ENCODE measurements at regions of chr7 and their contacts with region 1.

Region 1: DNA sequence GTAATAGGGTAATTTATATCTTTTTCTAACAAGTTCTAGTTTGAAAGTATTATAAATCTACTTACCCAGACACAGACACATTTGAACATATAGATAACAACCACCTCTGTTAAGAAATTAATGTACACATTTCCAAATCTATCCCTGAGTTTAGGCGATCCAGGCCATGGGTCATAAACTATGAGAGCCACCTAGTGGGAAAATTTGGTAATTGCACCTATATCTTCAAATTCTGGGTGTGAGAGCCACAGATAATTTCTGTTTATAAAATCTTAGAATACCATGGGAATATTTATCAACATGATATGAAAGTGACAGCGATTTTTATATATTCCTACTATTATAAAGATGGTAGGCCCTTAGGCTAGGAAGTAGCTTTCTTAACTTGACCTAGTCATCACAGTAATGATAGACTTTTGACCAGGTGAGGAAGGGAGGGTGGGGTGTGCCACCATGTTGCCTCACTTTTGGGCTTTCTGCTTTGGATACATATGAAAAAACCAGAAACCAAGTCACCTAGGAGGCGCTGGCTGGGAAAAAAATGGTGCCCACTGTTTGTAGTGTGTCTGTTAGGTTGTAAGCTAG is 8.0 kb upstream of the EPHA1 start:
- ATAC-seq: peak in 7 of 8 experiments; percentile 29 to 65 (median 43)
- H3K4me3 ChIP-seq: no peak overlapping the region
- H3K27ac ChIP-seq: no peak overlapping the region
- H3K4me1 ChIP-seq: peaks cover 1 to 25% of the 10 kb centered on the region in 2 donors

Region 2: DNA sequence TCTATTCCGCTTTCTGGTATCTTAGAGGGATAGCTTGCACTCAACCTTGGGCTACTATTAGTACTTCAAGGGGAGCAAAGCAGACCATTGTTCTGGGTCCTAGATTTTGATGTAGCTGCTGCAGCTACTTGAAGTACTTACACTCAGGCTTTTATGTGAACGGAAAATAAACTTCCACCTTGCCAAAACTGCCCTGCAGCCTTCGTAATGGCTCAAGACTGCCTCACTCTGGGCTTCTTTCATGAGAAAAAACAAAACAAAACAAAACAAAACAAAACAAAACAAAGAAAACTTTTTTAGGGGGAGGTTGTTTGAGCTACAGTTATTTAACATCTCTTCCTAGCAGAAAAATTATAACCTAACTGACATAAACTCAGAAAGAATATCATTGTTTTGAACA is 581.2 kb before region 1 on chr7:
- in situ Hi-C with region 1: no loop called
- ATAC-seq: no peak
- H3K4me3 ChIP-seq: no peak overlapping the region
- H3K27ac ChIP-seq: no peak overlapping the region
- H3K4me1 ChIP-seq: no peaks in the 10 kb centered on the region

Region 3: GRCh38 chr7:143240291-143241168 is 176.1 kb before region 1 on chr7:
- in situ Hi-C with region 1: loop called in 2 of 9 experiments (anchors 25 kb)
- ATAC-seq: peak; percentile 81 to 98 (median 88)
- H3K4me3 ChIP-seq: no peak overlapping the region
- H3K27ac ChIP-seq: no peak overlapping the region
- H3K4me1 ChIP-seq: peaks cover 16 to 18% of the 10 kb centered on the region in 2 donors